ENCODE measurements at regions of chr2 and their contacts with region 1.

Region 1: DNA sequence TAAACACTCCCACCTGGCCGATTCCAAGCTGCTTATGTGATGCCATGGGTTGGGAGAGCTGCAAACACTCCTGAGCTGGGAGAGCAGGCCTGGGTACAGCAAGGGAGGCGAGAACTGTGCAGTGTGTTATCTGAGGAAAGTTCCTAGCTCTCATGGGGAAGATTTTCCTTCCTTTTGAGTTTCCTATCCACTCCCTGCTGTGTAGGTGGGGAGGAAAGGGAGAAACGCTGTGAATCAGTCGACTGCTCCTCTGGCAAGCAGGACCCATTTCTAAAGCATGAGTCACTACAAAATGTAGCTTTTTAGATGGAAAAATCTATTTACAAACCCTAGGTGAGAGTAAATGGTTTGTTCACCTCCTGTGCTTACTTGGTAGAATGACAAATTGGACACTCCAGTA is 80.4 kb downstream of the SH3RF3 start:
- DNase-seq: no peak
- ATAC-seq: no peak
- H3K4me3 ChIP-seq: no peak overlapping the region
- H3K4me3 Mint-ChIP-seq: no peak overlapping the region
- H3K27ac ChIP-seq: no peak overlapping the region
- H3K27ac Mint-ChIP-seq: no peak overlapping the region
- H3K4me1 ChIP-seq: peaks cover 10 to 20% of the 10 kb centered on the region in 2 experiments
- H3K4me1 Mint-ChIP-seq: peaks cover 30 to 47% (median 44%) of the 10 kb centered on the region in 3 donors
- H3K27me3 ChIP-seq: peaks cover 2 to 61% of the 10 kb centered on the region in 2 experiments
- H3K27me3 Mint-ChIP-seq: peaks cover 28 to 44% of the 10 kb centered on the region in 2 donors

Region 2: DNA sequence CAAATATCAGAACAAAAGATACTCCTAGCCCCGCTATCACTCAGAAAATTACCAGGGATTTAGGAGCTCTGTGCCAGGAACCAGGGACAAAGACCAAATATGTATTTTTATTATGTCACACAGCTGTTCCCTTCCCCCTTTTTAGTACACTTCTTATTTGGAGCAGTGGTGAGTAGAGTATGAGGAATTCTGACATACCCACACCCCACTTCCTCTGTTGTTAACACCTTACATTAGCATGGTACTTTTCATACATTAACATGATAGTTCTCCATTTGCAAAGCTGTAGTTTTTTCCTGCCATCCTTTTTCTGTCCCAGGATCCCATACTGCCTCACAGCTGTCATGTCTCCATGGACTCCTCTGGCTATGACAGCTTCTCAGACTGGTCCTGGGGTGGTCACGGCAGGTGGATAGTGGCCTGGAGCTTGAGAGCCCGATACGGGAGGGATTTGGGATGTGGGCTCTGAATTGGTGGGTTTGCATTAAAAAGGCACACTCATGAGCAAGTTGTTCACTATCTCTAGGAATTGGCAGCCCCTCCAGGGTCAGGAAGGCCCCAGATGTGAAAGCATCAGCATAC is 19.8 kb after region 1 on chr2:
- CTCF ChIA-PET with region 1: no interaction called
- POLR2A ChIA-PET with region 1: interaction called, 3 to 15 read pairs
- DNase-seq: no peak
- ATAC-seq: no peak
- H3K4me3 ChIP-seq: no peak overlapping the region
- H3K4me3 Mint-ChIP-seq: no peak overlapping the region
- H3K27ac ChIP-seq: no peak overlapping the region
- H3K27ac Mint-ChIP-seq: no peak overlapping the region
- H3K4me1 ChIP-seq: no peaks in the 10 kb centered on the region
- H3K4me1 Mint-ChIP-seq: peaks cover 11% of the 10 kb centered on the region in 3 donors
- H3K27me3 ChIP-seq: peaks cover 0 to 18% of the 10 kb centered on the region in 2 experiments
- H3K27me3 Mint-ChIP-seq: peaks cover 0 to 21% of the 10 kb centered on the region in 2 donors

Region 3: GRCh38 chr2:109242654-109243331 is 33.4 kb after region 1 on chr2:
- CTCF ChIA-PET with region 1: no interaction called
- POLR2A ChIA-PET with region 1: no interaction called
- DNase-seq: no peak
- ATAC-seq: no peak
- H3K4me3 ChIP-seq: no peak overlapping the region
- H3K4me3 Mint-ChIP-seq: no peak overlapping the region
- H3K27ac ChIP-seq: no peak overlapping the region
- H3K27ac Mint-ChIP-seq: no peak overlapping the region
- H3K4me1 ChIP-seq: peaks cover 9 to 11% of the 10 kb centered on the region in 2 experiments
- H3K4me1 Mint-ChIP-seq: peaks cover 10 to 26% (median 14%) of the 10 kb centered on the region in 3 donors
- H3K27me3 ChIP-seq: no peaks in the 10 kb centered on the region
- H3K27me3 Mint-ChIP-seq: no peaks in the 10 kb centered on the region